Activated CD4-positive, alpha-beta T cell treated with anti-CD3 and anti-CD28 coated beads for 36 hours (primary cell): ENCODE measurements at regions of chr5 and their contacts with region 1.

Region 1: GRCh38 chr5:158074992-158075769 is 216.2 kb upstream of the CLINT1 start:
- DNase-seq: peak; percentile 70
- ATAC-seq: peak; percentile 78
- H3K4me3 Mint-ChIP-seq: no peak overlapping the region
- H3K27ac Mint-ChIP-seq: no peak overlapping the region
- H3K4me1 Mint-ChIP-seq: peaks cover 5% of the 10 kb centered on the region
- H3K27me3 Mint-ChIP-seq: peaks cover 2% of the 10 kb centered on the region

Region 2: GRCh38 chr5:156655732-156656131 is 1419.4 kb before region 1 on chr5:
- CTCF ChIA-PET with region 1: no interaction called
- POLR2A ChIA-PET with region 1: no interaction called
- intact Hi-C with region 1: no loop called
- DNase-seq: no peak
- ATAC-seq: no peak
- H3K4me3 Mint-ChIP-seq: no peak overlapping the region
- H3K27ac Mint-ChIP-seq: no peak overlapping the region
- H3K4me1 Mint-ChIP-seq: no peaks in the 10 kb centered on the region
- H3K27me3 Mint-ChIP-seq: peaks cover 9% of the 10 kb centered on the region

Region 3: GRCh38 chr5:158058208-158059120 is 16.7 kb before region 1 on chr5:
- CTCF ChIA-PET with region 1: interaction called, 23 read pairs
- POLR2A ChIA-PET with region 1: interaction called, 3 read pairs
- intact Hi-C with region 1: no loop called
- DNase-seq: no peak
- ATAC-seq: no peak
- H3K4me3 Mint-ChIP-seq: no peak overlapping the region
- H3K27ac Mint-ChIP-seq: no peak overlapping the region
- H3K4me1 Mint-ChIP-seq: no peaks in the 10 kb centered on the region
- H3K27me3 Mint-ChIP-seq: peaks cover 12% of the 10 kb centered on the region

Region 4: DNA sequence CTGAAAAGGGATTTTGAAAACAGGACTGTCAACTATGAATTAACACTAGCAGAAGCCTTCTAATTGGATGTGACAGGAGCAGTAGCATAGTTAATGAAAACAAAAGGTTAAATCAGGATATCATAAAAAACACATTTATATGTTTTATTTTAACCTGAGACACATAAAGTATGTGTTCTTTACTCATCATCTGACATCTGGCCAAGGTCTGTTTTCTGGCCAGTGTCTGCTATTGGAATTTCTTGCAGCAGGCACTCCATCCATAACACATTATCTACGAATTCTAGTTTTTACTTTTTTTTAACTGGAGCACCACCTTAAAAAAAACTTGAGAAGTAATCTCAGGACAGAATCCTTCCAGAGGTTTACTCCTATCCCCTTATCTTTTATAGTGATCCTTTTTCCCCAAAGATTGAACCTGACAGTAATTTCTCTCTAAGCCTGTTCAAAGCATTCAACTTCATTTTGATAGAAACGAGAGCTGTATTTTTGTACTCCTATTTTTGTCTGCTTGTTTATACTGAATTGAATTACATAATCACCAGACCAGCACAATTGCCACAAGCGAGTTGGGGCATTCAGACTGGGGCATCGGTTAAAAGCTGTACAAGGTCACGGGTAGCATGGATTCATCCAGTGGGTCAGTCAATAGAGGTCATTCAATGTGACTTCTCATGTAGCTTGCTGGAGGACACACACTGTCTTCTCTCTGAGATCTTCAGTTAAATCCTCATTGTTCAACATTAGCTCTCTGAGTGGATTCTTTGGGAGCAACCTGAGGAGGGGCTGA is 10.7 kb before region 1 on chr5:
- CTCF ChIA-PET with region 1: interaction called, 23 read pairs
- POLR2A ChIA-PET with region 1: interaction called, 3 read pairs
- intact Hi-C with region 1: no loop called
- DNase-seq: no peak
- ATAC-seq: no peak
- H3K4me3 Mint-ChIP-seq: no peak overlapping the region
- H3K27ac Mint-ChIP-seq: no peak overlapping the region
- H3K4me1 Mint-ChIP-seq: no peaks in the 10 kb centered on the region
- H3K27me3 Mint-ChIP-seq: peaks cover 2% of the 10 kb centered on the region

Region 5: DNA sequence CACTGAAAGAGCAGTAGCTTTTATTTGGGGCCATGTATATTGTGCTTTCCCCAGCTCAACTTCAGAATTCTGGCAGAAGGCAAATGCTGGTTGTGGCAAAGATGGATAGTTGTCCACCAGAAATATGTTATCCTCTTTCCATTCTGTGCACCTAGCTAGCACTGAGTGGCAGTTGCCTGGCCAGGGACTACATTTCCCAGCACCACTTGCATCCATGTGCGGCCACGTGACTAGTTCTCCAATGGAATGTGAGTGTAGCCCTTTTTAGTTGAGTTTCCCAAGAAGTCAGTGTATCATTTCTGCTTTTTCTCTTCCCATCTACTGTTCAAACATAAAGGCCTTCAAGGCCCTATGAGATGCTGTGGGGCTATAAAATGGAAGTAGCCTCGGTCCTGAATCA is 137.7 kb after region 1 on chr5:
- CTCF ChIA-PET with region 1: no interaction called
- POLR2A ChIA-PET with region 1: no interaction called
- intact Hi-C with region 1: no loop called
- DNase-seq: no peak
- ATAC-seq: no peak
- H3K4me3 Mint-ChIP-seq: no peak overlapping the region
- H3K27ac Mint-ChIP-seq: no peak overlapping the region
- H3K4me1 Mint-ChIP-seq: no peaks in the 10 kb centered on the region
- H3K27me3 Mint-ChIP-seq: no peaks in the 10 kb centered on the region